ENCODE measurements at regions of chr2 and their contacts with region 1.

Region 1: DNA sequence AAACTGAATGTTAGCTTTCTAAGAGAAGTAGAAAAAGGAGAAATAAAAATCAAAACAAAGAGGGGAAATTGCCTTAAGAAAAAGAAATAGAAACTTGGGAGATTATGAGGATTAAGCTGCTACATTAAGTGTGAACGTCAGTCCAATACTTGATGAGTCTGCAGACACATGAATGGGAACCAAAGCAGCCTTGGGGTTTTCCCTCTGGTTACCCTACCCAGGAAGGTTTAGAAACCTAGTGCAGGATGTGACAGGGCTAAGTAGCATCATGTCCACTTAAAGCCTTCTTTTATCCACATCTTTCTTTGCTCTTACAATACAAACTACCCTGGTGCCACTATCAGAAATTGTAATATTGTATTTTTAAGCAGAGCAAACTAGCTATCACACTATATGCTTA is 22.3 kb downstream of the SLC35F5 start:
- DNase-seq: no peak
- H3K4me3 ChIP-seq: no peak overlapping the region
- H3K27ac ChIP-seq: no peak overlapping the region
- H3K4me1 ChIP-seq: no peaks in the 10 kb centered on the region
- H3K27me3 ChIP-seq: no peaks in the 10 kb centered on the region
- CTCF ChIP-seq: no peak
- POLR2A ChIP-seq: no peak

Region 2: DNA sequence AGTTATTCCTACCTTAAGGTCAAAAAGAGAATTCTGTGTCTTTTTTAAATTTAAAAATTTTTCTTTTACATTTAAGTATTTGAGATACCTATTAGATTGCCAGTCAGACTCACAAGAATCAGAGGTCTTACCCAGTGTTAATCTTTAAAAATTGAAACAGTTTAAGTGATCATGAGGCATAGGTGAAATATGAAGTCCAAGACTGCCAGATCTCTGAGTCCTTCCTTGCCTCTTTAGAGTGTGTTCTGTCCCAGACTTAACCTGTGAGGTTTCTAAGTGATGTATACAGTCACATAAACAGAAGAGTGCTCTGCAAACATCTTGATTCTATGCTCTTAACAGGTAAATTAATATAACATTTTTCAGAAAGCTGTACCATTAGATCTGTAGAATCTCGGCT is 196.3 kb after region 1 on chr2:
- intact Hi-C with region 1: loop called (anchors 10 kb)
- DNase-seq: no peak
- H3K4me3 ChIP-seq: no peak overlapping the region
- H3K27ac ChIP-seq: no peak overlapping the region
- H3K4me1 ChIP-seq: peaks cover 0 to 42% (median 12%) of the 10 kb centered on the region in 6 donors
- H3K27me3 ChIP-seq: no peaks in the 10 kb centered on the region
- CTCF ChIP-seq: no peak
- POLR2A ChIP-seq: no peak